ENCODE measurements at regions of chr5 and their contacts with region 1.

Region 1: GRCh38 chr5:139844472-139845145 is 49.0 kb downstream of the PSD2 start:
- DNase-seq: peak; percentile 93
- ATAC-seq: peak; percentile 65
- H3K4me3 Mint-ChIP-seq: no peak overlapping the region
- H3K27ac Mint-ChIP-seq: no peak overlapping the region
- H3K4me1 Mint-ChIP-seq: peaks cover 15% of the 10 kb centered on the region
- H3K27me3 Mint-ChIP-seq: peaks cover 12% of the 10 kb centered on the region
- CTCF ChIP-seq: peak; percentile 91

Region 2: DNA sequence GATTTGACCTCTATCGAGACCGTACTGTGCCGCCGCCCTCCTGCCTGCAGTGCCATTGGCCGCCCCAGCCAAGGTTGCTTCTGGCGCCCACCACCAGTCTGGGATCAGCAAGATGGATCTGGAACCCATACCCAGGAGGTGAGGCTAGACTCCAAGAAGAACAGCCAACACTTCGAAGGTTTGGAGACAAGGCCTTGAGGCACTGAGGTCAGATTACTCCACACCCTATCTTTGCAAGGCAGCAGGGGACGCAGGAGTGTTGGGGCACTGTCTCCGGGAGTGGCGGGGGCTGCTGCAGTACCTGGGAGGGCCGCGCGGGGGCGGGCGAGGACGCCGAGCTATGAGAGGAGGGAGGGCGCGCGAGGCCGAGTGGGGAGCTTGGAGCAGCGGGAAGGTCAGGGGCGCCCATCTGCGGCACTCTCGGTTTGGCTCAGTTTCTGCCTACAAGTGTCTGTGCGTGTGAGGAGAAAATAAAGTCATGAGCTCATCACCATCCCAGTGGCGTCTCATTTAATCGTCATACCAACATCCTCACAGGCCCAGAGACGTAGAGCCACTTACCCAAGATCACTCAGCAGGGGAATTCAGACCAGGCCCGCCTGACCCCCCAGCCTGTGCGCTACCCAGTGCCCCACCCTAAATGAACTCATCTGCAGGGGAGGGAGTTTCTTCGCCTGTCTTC is 69.5 kb before region 1 on chr5:
- CTCF ChIA-PET with region 1: interaction called, 10 read pairs
- POLR2A ChIA-PET with region 1: interaction called, 7 read pairs
- intact Hi-C with region 1: no loop called
- DNase-seq: peak; percentile 93
- ATAC-seq: peak; percentile 100
- H3K4me3 Mint-ChIP-seq: peak overlapping the region; percentile 14
- H3K27ac Mint-ChIP-seq: peak overlapping the region; percentile 29
- H3K4me1 Mint-ChIP-seq: peaks cover 5% of the 10 kb centered on the region
- H3K27me3 Mint-ChIP-seq: peaks cover 6% of the 10 kb centered on the region
- CTCF ChIP-seq: peak; percentile 94

Region 3: GRCh38 chr5:139856714-139857113 is 12.1 kb after region 1 on chr5:
- CTCF ChIA-PET with region 1: interaction called, 19 read pairs
- POLR2A ChIA-PET with region 1: interaction called, 4 read pairs
- intact Hi-C with region 1: no loop called
- DNase-seq: no peak
- ATAC-seq: no peak
- H3K4me3 Mint-ChIP-seq: no peak overlapping the region
- H3K27ac Mint-ChIP-seq: no peak overlapping the region
- H3K4me1 Mint-ChIP-seq: no peaks in the 10 kb centered on the region
- H3K27me3 Mint-ChIP-seq: no peaks in the 10 kb centered on the region
- CTCF ChIP-seq: no peak